Dendritic cell treated with granulocyte-macrophage colony-stimulating factor and Interleukin-4, amounts not matched to agents 40 ng/mL and 50 ng/mL, for 4 days (primary cell): ENCODE measurements at regions of chr14 and their contacts with region 1.

Region 1: DNA sequence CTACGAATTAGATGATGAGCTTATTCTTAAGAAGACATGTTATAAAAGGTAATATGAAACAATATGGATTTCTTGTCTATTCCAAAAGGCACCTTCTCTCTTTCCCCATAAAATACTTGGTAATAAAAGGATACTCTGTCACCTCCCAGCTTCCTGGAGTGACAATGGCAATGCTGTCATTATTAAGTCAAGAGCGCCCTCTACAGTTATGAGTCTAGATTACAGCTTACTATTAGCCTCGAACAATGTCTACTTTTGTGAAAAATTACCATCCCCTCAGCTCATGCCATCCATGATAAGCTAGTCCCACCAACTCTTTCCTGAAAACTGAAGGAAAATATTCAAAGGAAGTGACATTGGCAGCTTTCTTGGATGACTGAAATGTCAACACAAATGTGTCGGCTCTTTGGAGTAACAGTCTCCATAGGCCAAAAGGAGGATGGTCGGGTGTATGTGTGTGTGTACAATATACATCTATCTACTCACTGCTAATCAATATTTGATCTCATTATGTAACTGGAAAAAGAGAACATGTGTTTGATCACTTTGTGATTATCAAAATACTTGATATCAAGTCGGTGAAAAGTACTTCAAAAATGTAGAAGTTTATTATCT is 48.7 kb upstream of the CDKN3 start:
- H3K4me3 Mint-ChIP-seq: no peak overlapping the region
- H3K27ac Mint-ChIP-seq: no peak overlapping the region
- H3K4me1 Mint-ChIP-seq: peaks cover 8% of the 10 kb centered on the region
- H3K27me3 Mint-ChIP-seq: peaks cover 9% of the 10 kb centered on the region

Region 2: DNA sequence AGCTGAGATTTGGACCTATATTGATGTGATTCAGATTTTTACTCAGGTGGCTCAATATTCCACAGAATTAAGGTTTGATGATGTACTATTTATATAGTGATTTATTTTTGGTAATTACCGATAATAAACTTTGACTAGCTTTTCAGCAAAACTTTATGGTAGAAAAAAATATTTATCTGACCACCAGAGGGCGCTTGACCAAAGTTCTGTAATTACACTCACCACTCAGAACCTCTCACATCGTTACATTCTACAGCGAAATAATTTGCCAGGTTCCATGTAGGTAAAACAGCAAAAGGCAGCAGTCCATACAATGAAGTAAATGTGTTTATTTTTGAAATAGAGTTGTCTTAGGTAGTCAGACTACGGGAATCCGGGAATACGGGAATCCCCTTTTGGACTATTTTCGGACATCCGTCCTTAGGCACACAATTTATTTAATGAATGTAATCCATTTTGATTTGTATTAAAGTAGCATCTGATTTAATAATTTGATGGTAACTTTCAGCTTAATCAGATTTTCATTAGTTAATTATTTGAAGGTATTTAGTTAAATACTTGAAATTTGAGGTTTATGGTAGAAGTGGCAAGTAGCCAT is 1052.0 kb before region 1 on chr14:
- intact Hi-C with region 1: loop called (anchors 1 kb)
- H3K4me3 Mint-ChIP-seq: no peak overlapping the region
- H3K27ac Mint-ChIP-seq: no peak overlapping the region
- H3K4me1 Mint-ChIP-seq: no peaks in the 10 kb centered on the region
- H3K27me3 Mint-ChIP-seq: no peaks in the 10 kb centered on the region